ENCODE measurements at regions of chr3 and their contacts with region 1.

Region 1: GRCh38 chr3:99842826-99843589 is 25.3 kb downstream of the CMSS1 start:
- DNase-seq: no peak
- H3K4me3 ChIP-seq: no peak overlapping the region
- H3K27me3 ChIP-seq: no peaks in the 10 kb centered on the region
- CTCF ChIP-seq: peak; percentile 70

Region 2: GRCh38 chr3:99199021-99199420 is 644.0 kb before region 1 on chr3:
- CTCF ChIA-PET with region 1: no interaction called
- POLR2A ChIA-PET with region 1: no interaction called
- DNase-seq: no peak
- H3K4me3 ChIP-seq: no peak overlapping the region
- H3K27me3 ChIP-seq: no peaks in the 10 kb centered on the region
- CTCF ChIP-seq: no peak

Region 3: GRCh38 chr3:99803297-99803696 is 39.7 kb before region 1 on chr3:
- CTCF ChIA-PET with region 1: no interaction called
- POLR2A ChIA-PET with region 1: no interaction called
- DNase-seq: no peak
- H3K4me3 ChIP-seq: no peak overlapping the region
- H3K27me3 ChIP-seq: no peaks in the 10 kb centered on the region
- CTCF ChIP-seq: no peak

Region 4: DNA sequence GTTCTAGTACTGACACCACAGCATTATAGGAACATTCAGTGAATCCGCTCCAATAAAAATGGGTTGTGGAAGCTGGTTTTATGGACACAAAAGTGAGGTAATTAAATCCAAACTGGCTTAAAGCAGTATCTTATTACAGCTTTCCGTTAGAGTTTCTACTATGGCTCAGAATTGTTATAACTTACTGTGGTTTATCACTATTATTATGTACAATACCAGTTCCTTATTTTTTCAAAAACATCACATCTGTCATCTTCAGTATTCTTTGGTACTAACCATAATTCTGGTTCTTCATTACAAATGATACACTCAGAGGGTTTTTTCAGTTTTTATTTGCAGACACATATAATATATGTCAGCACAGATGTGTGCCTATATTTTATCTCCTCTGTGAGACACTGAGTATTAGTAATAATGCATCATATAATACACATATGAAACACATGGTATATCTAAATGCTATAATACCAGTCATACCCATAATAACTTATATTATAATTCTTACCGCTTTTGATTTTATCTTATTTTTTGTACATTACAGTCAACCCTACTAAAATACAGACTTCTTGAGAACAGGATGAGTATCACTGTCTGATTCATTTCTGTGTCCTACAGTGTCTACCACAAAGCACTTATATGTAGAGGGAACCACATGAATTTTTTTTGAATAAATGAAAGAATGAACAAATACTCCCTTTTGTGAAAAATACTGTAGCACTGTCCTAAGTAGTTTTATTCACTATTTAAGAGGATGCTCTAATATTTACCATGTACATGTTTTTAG is 13.6 kb after region 1 on chr3:
- CTCF ChIA-PET with region 1: interaction called, 10 read pairs
- POLR2A ChIA-PET with region 1: no interaction called
- DNase-seq: no peak
- H3K4me3 ChIP-seq: no peak overlapping the region
- H3K27me3 ChIP-seq: no peaks in the 10 kb centered on the region
- CTCF ChIP-seq: no peak

Region 5: DNA sequence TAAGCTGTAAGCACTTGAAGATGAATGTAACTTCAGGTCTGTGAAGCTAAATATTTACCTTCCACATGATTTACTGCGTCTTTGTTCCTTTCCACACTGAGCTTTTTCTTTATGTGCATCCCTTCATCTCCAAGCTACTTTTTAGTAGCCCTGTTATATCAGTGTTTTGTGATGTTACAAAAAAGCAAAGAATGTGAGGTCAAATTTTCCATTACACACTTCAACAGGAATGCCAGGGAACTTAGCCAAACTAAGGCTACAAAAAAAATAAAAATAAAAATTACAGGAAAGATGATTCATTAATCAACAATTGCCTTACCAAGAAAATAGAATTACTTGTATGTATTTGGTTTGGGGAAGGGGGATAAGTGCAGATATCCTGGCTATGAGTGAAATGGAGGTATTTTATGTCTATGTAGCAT is 198.3 kb after region 1 on chr3:
- CTCF ChIA-PET with region 1: interaction called, 12 read pairs
- POLR2A ChIA-PET with region 1: no interaction called
- DNase-seq: peak; percentile 88
- H3K4me3 ChIP-seq: no peak overlapping the region
- H3K27me3 ChIP-seq: no peaks in the 10 kb centered on the region
- CTCF ChIP-seq: no peak

Region 6: GRCh38 chr3:100254168-100254777 is 411.3 kb after region 1 on chr3:
- CTCF ChIA-PET with region 1: interaction called, 17 read pairs
- POLR2A ChIA-PET with region 1: no interaction called
- DNase-seq: no peak
- H3K4me3 ChIP-seq: no peak overlapping the region
- H3K27me3 ChIP-seq: no peaks in the 10 kb centered on the region
- CTCF ChIP-seq: peak; percentile 77